ENCODE measurements at regions of chr19 and their contacts with region 1.

Region 1: DNA sequence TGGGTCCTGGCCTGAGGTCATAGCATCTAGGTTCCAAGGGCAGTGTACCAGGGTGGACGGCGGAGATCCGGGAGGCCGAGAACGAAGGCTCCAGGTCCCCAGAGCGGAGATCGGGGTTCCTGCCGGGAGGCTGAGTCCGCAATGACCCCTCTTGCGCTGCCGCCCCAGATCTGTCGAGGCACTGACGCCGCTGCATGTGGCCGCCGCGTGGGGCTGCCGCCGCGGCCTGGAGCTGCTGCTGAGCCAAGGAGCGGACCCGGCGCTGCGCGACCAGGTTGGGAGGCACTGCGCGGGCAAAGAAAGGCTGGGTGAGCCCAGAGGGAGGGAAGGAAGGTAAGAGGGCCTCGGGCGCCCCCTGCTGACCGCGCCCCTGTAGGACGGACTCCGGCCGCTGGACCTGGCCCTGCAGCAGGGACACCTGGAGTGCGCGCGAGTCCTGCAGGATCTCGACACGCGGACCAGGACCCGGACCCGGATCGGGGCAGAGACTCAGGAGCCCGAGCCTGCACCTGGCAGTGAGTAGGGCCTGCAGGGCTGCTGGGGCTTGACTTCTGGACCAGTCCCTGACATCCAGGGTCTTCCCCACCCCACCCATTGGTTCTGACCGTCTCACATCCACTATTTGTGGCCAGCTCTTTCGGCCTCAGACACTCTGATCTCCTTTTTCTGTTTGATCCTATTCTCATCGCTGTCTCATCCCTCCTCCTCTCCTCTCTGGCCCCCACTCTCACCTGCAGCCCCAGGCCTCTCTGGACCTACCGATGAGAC is 971 bp downstream of the ANKLE1 start:
- DNase-seq: peak; percentile 85 to 95
- ATAC-seq: peak; percentile 95
- H3K4me3 ChIP-seq: no peak overlapping the region
- H3K27ac ChIP-seq: no peak overlapping the region
- H3K4me1 ChIP-seq: no peaks in the 10 kb centered on the region
- H3K27me3 ChIP-seq: no peaks in the 10 kb centered on the region

Region 2: GRCh38 chr19:17069218-17069617 is 213.5 kb before region 1 on chr19:
- intact Hi-C with region 1: loop called (anchors 2 to 5 kb)
- DNase-seq: no peak
- ATAC-seq: no peak
- H3K4me3 ChIP-seq: no peak overlapping the region
- H3K27ac ChIP-seq: no peak overlapping the region
- H3K4me1 ChIP-seq: no peaks in the 10 kb centered on the region
- H3K27me3 ChIP-seq: no peaks in the 10 kb centered on the region

Region 3: DNA sequence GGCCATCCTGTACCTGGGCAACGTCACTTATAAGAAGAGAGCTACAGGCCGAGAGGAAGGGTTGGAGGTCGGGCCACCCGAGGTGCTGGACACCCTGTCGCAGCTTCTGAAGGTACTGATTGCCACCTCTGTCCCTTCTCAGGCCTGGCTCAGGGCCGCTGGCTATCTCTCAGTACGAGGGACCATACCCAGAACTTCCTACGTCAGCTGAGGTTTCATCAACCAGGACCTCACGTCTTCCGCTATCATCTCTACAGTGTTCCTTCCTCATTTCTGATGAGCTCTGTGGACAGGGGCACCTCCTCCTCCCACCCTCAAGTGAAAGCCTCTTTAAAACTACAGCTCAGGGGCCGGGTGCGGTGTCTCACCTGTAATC is 125.8 kb before region 1 on chr19:
- intact Hi-C with region 1: no loop called
- DNase-seq: no peak
- ATAC-seq: no peak
- H3K4me3 ChIP-seq: no peak overlapping the region
- H3K27ac ChIP-seq: no peak overlapping the region
- H3K4me1 ChIP-seq: no peaks in the 10 kb centered on the region
- H3K27me3 ChIP-seq: no peaks in the 10 kb centered on the region

Region 4: GRCh38 chr19:17201913-17202648 is 80.6 kb before region 1 on chr19:
- intact Hi-C with region 1: loop called in 1 of 2 experiments (anchors 5 kb)
- DNase-seq: no peak
- ATAC-seq: no peak
- H3K4me3 ChIP-seq: no peak overlapping the region
- H3K27ac ChIP-seq: no peak overlapping the region
- H3K4me1 ChIP-seq: no peaks in the 10 kb centered on the region
- H3K27me3 ChIP-seq: no peaks in the 10 kb centered on the region

Region 5: DNA sequence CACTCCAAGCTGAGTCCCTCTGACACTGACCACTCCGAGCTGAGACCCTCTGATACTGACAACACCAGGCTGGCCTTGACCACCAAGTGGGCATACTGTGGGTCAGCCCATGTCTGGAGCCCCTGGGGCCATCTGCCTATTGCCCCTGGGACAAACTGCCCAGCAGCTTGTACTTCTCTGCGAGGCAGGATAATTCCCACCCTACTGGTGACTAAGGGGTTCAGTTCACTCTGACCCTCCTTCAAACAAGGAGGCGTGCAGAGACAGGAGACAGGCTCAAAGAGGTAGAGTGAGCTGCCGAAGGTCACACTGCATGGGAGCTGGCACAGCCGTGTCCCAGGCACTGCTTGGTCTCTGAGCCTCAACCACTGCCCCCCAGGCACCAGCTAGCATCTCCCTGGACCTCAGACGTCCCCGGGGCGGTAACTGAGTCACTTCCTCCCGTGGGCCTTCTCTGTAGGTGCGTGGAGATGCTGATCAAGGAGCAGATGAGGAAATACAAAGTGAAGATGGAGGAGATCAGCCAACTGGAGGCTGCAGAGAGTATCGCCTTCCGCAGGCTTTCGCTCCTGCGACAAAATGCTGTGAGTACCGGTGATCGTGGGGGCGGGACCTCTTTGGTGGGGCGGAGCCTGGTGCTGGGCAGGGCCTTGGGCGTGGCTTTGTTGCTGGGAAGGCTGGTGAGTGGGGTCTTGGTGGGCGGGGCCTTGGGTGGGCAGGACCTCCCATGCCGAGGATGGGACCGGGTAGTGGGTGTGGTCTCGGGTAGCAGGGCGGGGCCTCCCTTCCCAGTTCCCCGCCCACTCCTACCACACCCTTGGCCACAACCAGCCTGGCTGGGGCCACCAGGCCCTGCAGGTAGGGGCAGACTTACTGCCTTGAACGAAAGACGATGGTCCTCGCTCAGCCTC is 73.3 kb before region 1 on chr19:
- intact Hi-C with region 1: loop called (anchors 5 kb)
- DNase-seq: peak; percentile 51 to 84
- ATAC-seq: no peak
- H3K4me3 ChIP-seq: no peak overlapping the region
- H3K27ac ChIP-seq: no peak overlapping the region
- H3K4me1 ChIP-seq: no peaks in the 10 kb centered on the region
- H3K27me3 ChIP-seq: no peaks in the 10 kb centered on the region